Endothelial cell of umbilical vein (primary cell): ENCODE measurements at regions of chr20 and their contacts with region 1.

Region 1: GRCh38 chr20:53077373-53078205 is 105.4 kb downstream of the TSHZ2 start:
- DNase-seq: peak; percentile 60
- H3K4me3 ChIP-seq: no peak overlapping the region
- H3K27ac ChIP-seq: peak overlapping the region; percentile 38
- H3K4me1 ChIP-seq: peaks cover 32% of the 10 kb centered on the region
- H3K27me3 ChIP-seq: no peaks in the 10 kb centered on the region
- CTCF ChIP-seq: no peak
- POLR2A ChIP-seq: no peak

Region 2: GRCh38 chr20:52895701-52896100 is 181.9 kb before region 1 on chr20:
- CTCF ChIA-PET with region 1: no interaction called
- POLR2A ChIA-PET with region 1: no interaction called
- dilution Hi-C with region 1: no loop called
- intact Hi-C with region 1: no loop called
- DNase-seq: no peak
- H3K4me3 ChIP-seq: no peak overlapping the region
- H3K27ac ChIP-seq: no peak overlapping the region
- H3K4me1 ChIP-seq: no peaks in the 10 kb centered on the region
- H3K27me3 ChIP-seq: no peaks in the 10 kb centered on the region
- CTCF ChIP-seq: no peak
- POLR2A ChIP-seq: no peak

Region 3: DNA sequence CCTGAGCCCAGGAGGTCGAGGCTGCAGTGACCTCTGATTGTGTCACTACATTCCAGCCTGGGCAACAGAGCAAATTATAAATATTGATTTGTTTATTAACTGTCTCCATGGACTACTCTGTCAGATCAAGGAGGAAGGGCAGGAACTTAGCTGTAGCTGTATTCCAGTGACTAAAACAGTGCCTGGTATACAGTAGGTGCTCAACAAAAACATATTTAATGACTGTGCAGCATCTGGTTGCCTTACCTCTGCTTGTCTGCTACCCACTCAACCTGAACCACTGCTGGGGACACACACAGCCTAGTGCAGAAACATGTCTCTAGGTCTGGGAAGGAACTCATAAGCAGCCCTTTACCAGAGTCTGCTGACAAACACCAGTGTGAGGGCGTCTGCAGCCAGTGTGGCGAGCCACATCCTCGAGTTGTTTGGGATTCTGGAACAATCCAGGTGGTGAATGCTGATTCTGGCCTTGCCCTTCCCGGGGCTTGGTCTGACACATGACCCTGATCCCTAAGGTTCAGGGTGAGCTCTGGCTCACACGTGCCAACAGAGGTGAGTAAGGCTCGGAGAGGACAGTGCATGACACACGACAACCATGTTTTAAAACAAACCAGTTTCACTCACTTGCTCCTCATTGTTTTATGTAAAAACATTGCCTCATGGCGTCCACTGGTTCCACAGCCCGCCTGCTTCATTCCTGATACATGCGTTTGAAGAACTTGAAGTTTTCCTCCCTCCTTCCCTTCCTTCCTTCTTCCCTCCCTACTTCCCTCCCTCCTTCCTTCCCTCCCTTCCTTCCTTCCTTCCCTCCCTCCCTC is 634.0 kb after region 1 on chr20:
- CTCF ChIA-PET with region 1: no interaction called
- POLR2A ChIA-PET with region 1: no interaction called
- dilution Hi-C with region 1: no loop called
- intact Hi-C with region 1: loop called (anchors 10 kb)
- DNase-seq: no peak
- H3K4me3 ChIP-seq: no peak overlapping the region
- H3K27ac ChIP-seq: no peak overlapping the region
- H3K4me1 ChIP-seq: no peaks in the 10 kb centered on the region
- H3K27me3 ChIP-seq: no peaks in the 10 kb centered on the region
- CTCF ChIP-seq: no peak
- POLR2A ChIP-seq: no peak